OCI-LY7 (cell line): ENCODE measurements at regions of chr22 and their contacts with region 1.

Region 1: DNA sequence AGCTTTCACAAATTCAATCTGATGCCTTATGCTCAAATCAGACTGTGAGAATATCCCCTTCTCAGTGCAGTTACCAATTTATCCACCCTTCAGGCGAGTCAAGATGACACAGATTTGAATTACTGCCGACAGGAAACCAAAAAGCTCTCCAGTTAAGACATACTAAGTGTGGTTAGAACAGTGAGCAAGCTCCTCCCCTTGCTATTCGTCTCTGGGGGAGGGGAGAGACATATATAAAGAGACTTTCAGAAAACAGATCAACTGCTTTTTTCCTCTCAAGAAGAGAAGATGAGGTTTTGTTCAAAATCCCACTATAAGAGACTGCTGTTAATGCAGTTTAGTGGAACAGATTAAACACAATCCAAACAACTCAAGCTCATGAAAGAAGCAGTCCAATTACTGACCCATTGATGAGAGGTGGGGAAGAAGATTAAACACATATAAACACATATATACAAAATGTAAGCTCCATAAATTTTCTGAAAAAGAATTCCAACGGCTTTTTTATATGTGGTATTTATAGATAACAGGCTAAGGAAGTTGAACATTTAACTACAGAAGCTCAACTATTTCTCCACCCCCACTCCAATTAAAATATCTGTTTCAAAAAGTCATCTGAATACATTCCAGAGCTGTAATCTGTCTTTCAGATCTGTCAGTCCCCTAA is 102.7 kb downstream of the MRTFA start:
- DNase-seq: peak; percentile 89
- H3K4me3 ChIP-seq: peak overlapping the region; percentile 68
- H3K27ac ChIP-seq: peak overlapping the region; percentile 68
- H3K4me1 ChIP-seq: peaks cover 58% of the 10 kb centered on the region
- CTCF ChIP-seq: no peak

Region 2: GRCh38 chr22:40593460-40594273 is 59.8 kb after region 1 on chr22:
- CTCF ChIA-PET with region 1: no interaction called
- POLR2A ChIA-PET with region 1: interaction called, 5 read pairs
- intact Hi-C with region 1: loop called (anchors 5 kb)
- DNase-seq: peak; percentile 73
- H3K4me3 ChIP-seq: peak overlapping the region; percentile 54
- H3K27ac ChIP-seq: peak overlapping the region; percentile 78
- H3K4me1 ChIP-seq: peaks cover 67% of the 10 kb centered on the region
- CTCF ChIP-seq: no peak; the same call in 1 of the 2 replicates